BJ (cell line): ENCODE measurements at regions of chrX and their contacts with region 1.

Region 1: DNA sequence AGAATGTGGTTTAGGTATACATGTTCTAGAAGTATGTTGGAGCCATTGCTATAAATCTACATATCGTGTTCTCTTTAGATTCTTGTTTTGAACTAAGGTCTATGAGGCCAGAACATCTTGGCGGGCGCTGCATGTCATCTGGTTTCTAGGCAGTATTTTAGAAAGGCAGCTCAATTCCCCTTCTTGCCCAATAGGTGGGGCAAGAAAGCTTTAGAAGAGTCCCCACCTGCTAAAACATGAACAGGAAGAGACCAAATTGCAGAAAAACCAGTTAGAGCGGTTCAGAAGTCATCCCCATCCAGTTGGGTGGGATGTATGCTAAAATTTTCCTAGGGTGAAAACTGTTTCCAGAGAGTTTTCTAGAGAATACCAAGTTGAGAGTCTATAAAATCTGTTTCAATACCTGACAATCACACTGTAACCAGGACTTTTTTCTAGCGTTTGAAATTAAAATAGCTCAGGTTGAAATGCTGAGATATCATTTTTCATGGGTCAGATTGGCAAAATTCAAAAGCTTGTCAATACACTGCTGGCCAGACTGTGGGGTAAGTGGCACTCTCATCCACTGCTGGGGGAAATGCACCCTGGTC is 17.5 kb upstream of the SH3KBP1 start:
- DNase-seq: no peak
- H3K4me3 ChIP-seq: no peak overlapping the region
- H3K27me3 ChIP-seq: no peaks in the 10 kb centered on the region
- CTCF ChIP-seq: peak; percentile 74

Region 2: GRCh38 chrX:19566359-19567222 is 338.3 kb before region 1 on chrX:
- CTCF ChIA-PET with region 1: no interaction called
- POLR2A ChIA-PET with region 1: no interaction called
- DNase-seq: no peak
- H3K4me3 ChIP-seq: no peak overlapping the region
- H3K27me3 ChIP-seq: no peaks in the 10 kb centered on the region
- CTCF ChIP-seq: no peak

Region 3: DNA sequence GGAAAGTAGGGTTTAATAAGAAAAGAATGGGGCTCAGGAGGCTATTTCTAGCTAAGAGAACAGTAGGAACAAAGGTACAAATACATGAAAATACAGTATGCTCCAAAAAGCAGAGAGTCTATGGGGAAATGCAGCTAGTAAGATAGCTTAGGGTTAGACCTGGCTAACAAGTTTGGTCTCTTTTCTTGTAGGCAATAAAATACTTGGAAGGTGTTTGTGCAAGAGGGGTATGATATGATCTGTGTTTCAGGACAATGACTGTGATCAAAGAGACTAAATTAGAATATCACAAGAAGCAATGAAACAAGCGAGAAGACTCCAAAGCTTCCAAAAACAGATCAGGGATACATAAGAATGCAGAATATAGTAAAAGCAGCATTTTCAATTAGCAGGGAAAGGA is 16.1 kb after region 1 on chrX:
- CTCF ChIA-PET with region 1: no interaction called
- POLR2A ChIA-PET with region 1: no interaction called
- DNase-seq: no peak
- H3K4me3 ChIP-seq: no peak overlapping the region
- H3K27me3 ChIP-seq: no peaks in the 10 kb centered on the region
- CTCF ChIP-seq: no peak

Region 4: GRCh38 chrX:20066968-20067708 is 162.3 kb after region 1 on chrX:
- CTCF ChIA-PET with region 1: interaction called, 11 read pairs
- POLR2A ChIA-PET with region 1: no interaction called
- DNase-seq: no peak
- H3K4me3 ChIP-seq: no peak overlapping the region
- H3K27me3 ChIP-seq: no peaks in the 10 kb centered on the region
- CTCF ChIP-seq: peak; percentile 47